Psoas muscle (tissue), 8 donors: ENCODE measurements at regions of chr10 and their contacts with region 1.

Region 1: GRCh38 chr10:44370731-44371248 is 14.1 kb downstream of the CXCL12 start:
- DNase-seq: no peak
- ATAC-seq: no peak
- H3K4me3 ChIP-seq: no peak overlapping the region
- H3K27ac ChIP-seq: no peak overlapping the region
- H3K4me1 ChIP-seq: peaks cover 4% of the 10 kb centered on the region
- H3K27me3 ChIP-seq: no peaks in the 10 kb centered on the region
- CTCF ChIP-seq: no peak

Region 2: GRCh38 chr10:44051584-44052385 is 319.0 kb before region 1 on chr10:
- intact Hi-C with region 1: loop called in 1 of 2 experiments (anchors 10 kb)
- DNase-seq: peak in 1 of 2 donors; percentile 39
- ATAC-seq: no peak
- H3K4me3 ChIP-seq: no peak overlapping the region
- H3K27ac ChIP-seq: no peak overlapping the region
- H3K4me1 ChIP-seq: no peaks in the 10 kb centered on the region
- H3K27me3 ChIP-seq: no peaks in the 10 kb centered on the region
- CTCF ChIP-seq: no peak

Region 3: GRCh38 chr10:44325157-44325556 is 45.6 kb before region 1 on chr10:
- intact Hi-C with region 1: no loop called
- DNase-seq: no peak
- ATAC-seq: peak in 3 of 4 donors; percentile 25 to 45 (median 44)
- H3K4me3 ChIP-seq: no peak overlapping the region
- H3K27ac ChIP-seq: no peak overlapping the region
- H3K4me1 ChIP-seq: peaks cover 18% of the 10 kb centered on the region
- H3K27me3 ChIP-seq: no peaks in the 10 kb centered on the region
- CTCF ChIP-seq: no peak

Region 4: GRCh38 chr10:44352316-44353127 is 18.3 kb before region 1 on chr10:
- intact Hi-C with region 1: no loop called
- DNase-seq: peak; percentile 56 to 79
- ATAC-seq: peak; percentile 45 to 76 (median 52)
- H3K4me3 ChIP-seq: no peak overlapping the region
- H3K27ac ChIP-seq: no peak overlapping the region
- H3K4me1 ChIP-seq: no peaks in the 10 kb centered on the region
- H3K27me3 ChIP-seq: no peaks in the 10 kb centered on the region
- CTCF ChIP-seq: no peak